Breast epithelium (tissue), 4 donors: ENCODE measurements at regions of chr4 and their contacts with region 1.

Region 1: GRCh38 chr4:180086479-180087190 is 2156.6 kb upstream of the TENM3 start:
- DNase-seq: no peak
- H3K4me3 ChIP-seq: no peak overlapping the region
- H3K27ac ChIP-seq: no peak overlapping the region
- H3K4me1 ChIP-seq: no peaks in the 10 kb centered on the region
- H3K27me3 ChIP-seq: no peaks in the 10 kb centered on the region
- CTCF ChIP-seq: no peak
- POLR2A ChIP-seq: no peak

Region 2: GRCh38 chr4:179831274-179831673 is 255.4 kb before region 1 on chr4:
- intact Hi-C with region 1: loop called (anchors 5 kb)
- DNase-seq: no peak
- H3K4me3 ChIP-seq: no peak overlapping the region
- H3K27ac ChIP-seq: no peak overlapping the region
- H3K4me1 ChIP-seq: no peaks in the 10 kb centered on the region
- H3K27me3 ChIP-seq: no peaks in the 10 kb centered on the region
- CTCF ChIP-seq: no peak
- POLR2A ChIP-seq: no peak